ENCODE measurements at regions of chr4 and their contacts with region 1.

Region 1: DNA sequence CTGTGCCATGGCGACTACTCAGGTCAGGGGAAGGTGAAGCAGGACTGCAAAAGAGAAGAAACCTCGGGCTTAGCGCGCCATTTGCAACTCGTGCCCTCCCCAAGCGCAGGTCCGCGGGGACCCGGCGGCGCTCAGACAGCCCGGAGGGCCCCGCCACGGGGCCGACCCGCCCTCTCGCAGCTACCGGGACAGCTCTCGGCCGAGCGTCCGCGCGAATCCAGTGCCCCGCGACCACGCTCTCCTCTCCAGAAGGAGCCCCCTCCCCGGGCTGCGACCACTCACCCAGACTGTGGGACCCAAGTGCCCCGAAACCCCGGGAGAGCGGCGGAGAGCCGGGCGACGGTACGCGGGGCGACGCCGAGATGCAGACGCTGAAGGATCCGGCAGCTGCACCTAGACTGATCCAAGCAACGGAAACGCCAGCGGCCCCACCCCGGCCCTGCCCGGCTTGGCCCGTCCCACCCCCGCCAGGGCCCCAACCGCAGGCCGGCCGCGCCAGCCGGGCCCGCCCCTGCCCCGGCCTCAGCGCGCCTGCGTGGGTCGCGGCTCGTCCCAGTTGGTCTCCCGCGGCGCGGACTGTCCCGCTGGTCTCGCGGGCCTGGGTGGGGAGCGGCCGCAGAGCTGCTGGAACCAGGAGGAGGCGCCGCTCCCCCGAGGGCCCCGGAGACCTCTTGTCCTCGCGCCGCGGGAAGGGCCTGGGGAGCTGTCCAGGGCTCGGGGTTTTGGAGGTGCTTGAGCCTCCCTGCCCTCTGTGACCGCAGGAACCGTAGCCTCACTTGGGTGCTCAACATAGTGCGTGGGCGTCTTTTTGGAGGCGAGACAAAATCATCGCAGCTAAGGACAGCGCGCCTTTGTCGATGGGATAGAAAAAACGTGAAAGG is at the start of gene ANXA5:
- DNase-seq: peak; percentile 79
- H3K4me3 Mint-ChIP-seq: peak within 1 kb of the TSS; percentile 93
- H3K27ac Mint-ChIP-seq: peak within 1 kb of the TSS; percentile 91
- H3K4me1 Mint-ChIP-seq: peaks cover 11% of the 10 kb centered on the region
- H3K27me3 Mint-ChIP-seq: peaks cover 14% of the 10 kb centered on the region
- total RNA-seq, gene ANXA5: 98.4 to 99.5 TPM

Region 2: GRCh38 chr4:121736735-121737351 is 40.0 kb after region 1 on chr4:
- CTCF ChIA-PET with region 1: no interaction called
- intact Hi-C with region 1: no loop called
- DNase-seq: peak; percentile 44
- H3K4me3 Mint-ChIP-seq: no peak overlapping the region
- H3K27ac Mint-ChIP-seq: no peak overlapping the region
- H3K4me1 Mint-ChIP-seq: no peaks in the 10 kb centered on the region
- H3K27me3 Mint-ChIP-seq: no peaks in the 10 kb centered on the region

Region 3: GRCh38 chr4:121869841-121870656 is 173.2 kb after region 1 on chr4 and contains the start of gene BBS7:
- CTCF ChIA-PET with region 1: interaction called, 4 read pairs
- intact Hi-C with region 1: loop called (anchors 2 kb)
- DNase-seq: peak; percentile 99
- H3K4me3 Mint-ChIP-seq: peak within 1 kb of the TSS; percentile 95
- H3K27ac Mint-ChIP-seq: peak within 1 kb of the TSS; percentile 76
- H3K4me1 Mint-ChIP-seq: peaks cover 30% of the 10 kb centered on the region
- H3K27me3 Mint-ChIP-seq: peaks cover 11% of the 10 kb centered on the region
- total RNA-seq, gene BBS7: 16.6 to 19.4 TPM